Naive thymus-derived CD4-positive, alpha-beta T cell (primary cell): ENCODE measurements at regions of chr11 and their contacts with region 1.

Region 1: GRCh38 chr11:19232910-19233503 is 7.7 kb downstream of the E2F8 start:
- DNase-seq: no peak
- ATAC-seq: no peak
- H3K4me3 ChIP-seq: no peak overlapping the region
- H3K4me3 Mint-ChIP-seq: no peak overlapping the region
- H3K27ac ChIP-seq: no peak overlapping the region
- H3K27ac Mint-ChIP-seq: no peak overlapping the region
- H3K4me1 ChIP-seq: no peaks in the 10 kb centered on the region
- H3K4me1 Mint-ChIP-seq: peaks cover 0 to 28% (median 0%) of the 10 kb centered on the region in 7 donors
- H3K27me3 ChIP-seq: no peaks in the 10 kb centered on the region
- H3K27me3 Mint-ChIP-seq: peaks cover 0 to 10% (median 0%) of the 10 kb centered on the region in 5 donors

Region 2: DNA sequence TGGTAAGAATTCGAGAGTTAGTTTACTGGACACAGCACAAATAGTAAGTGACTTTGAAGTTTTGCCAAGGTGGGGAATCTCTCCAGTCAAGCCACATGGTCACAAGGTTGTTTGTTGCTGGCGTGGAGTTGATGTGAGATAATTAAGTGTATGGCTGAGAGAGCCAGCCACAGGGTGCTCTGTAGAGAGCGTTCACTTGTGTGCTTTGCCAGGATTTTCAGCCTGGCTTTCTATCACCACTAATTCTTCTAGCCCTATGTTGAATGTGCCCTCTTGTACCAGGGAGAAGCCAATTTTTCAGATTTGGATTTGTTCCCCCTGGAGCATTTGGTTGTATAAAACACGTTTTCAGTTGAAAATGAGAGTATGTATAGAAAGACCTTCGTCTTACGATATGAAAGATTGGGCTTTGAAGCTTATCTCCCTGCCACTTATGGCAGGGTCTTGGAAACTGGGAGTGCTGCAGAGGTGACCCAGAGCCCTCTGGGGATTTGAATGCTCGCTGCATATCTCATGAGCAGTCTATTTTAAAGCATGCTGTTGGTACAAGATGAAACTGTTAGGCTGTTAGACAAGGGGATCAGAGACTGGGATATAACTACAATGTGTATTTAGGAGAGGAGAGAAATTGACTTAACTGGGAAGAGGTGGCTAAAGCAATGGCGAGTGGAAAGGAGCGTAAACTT is 59.9 kb before region 1 on chr11:
- CTCF ChIA-PET with region 1: no interaction called
- POLR2A ChIA-PET with region 1: no interaction called
- intact Hi-C with region 1: loop called in 1 of 2 experiments (anchors 10 kb)
- DNase-seq: no peak
- ATAC-seq: no peak
- H3K4me3 ChIP-seq: no peak overlapping the region
- H3K4me3 Mint-ChIP-seq: no peak overlapping the region
- H3K27ac ChIP-seq: no peak overlapping the region
- H3K27ac Mint-ChIP-seq: peak overlapping the region in 1 of 9 donors; percentile 48
- H3K4me1 ChIP-seq: no peaks in the 10 kb centered on the region
- H3K4me1 Mint-ChIP-seq: no peaks in the 10 kb centered on the region
- H3K27me3 ChIP-seq: no peaks in the 10 kb centered on the region
- H3K27me3 Mint-ChIP-seq: no peaks in the 10 kb centered on the region

Region 3: DNA sequence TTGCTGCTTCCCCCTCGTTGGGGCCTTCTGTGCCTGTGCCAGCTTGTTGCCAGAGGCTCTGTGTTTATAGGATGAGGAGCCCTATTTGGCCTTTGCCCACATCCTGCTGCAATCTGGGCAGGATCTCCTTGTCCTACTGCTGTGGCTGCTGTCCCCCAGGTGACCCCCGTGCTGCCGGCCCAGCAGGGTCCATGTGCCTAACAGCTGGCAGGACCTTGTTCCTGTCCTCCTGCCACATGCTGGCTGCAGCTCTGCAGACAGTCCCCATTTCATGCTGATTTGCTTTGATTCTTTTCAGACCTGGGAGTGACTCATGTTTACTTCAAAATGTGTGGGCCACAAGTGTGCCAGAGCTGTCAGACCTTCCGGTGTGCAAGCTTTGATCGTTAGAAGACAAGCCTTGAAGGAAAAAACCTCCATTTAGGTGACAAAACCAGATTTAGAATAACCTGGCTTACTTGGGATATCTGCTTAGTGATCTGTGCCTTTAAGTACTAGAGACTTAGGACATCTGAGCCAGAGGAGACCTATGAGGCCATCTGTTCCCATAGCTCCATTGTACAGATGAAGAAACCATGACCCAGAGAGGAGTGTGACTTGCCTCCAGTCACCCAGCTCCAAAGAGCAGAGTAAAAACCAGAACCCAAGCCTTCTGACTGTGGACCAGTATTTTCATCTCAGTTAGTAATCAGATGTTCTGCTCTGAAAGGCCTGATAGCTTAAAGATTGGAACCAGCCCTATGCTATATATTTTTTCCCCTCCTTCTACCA is 490.8 kb after region 1 on chr11:
- CTCF ChIA-PET with region 1: no interaction called
- POLR2A ChIA-PET with region 1: no interaction called
- intact Hi-C with region 1: loop called in 1 of 2 experiments (anchors 2 kb)
- DNase-seq: peak in 5 of 9 donors; percentile 7 to 34 (median 19)
- ATAC-seq: peak; percentile 80
- H3K4me3 ChIP-seq: no peak overlapping the region
- H3K4me3 Mint-ChIP-seq: peak overlapping the region in 8 of 10 donors; percentile 4 to 66 (median 38)
- H3K27ac ChIP-seq: no peak overlapping the region
- H3K27ac Mint-ChIP-seq: peak overlapping the region; percentile 34 to 92 (median 75)
- H3K4me1 ChIP-seq: peaks cover 17 to 25% of the 10 kb centered on the region in 2 donors
- H3K4me1 Mint-ChIP-seq: peaks cover 16 to 30% (median 21%) of the 10 kb centered on the region in 7 donors
- H3K27me3 ChIP-seq: no peaks in the 10 kb centered on the region
- H3K27me3 Mint-ChIP-seq: peaks cover 0 to 25% (median 0%) of the 10 kb centered on the region in 5 donors